Gastrocnemius medialis (tissue), 4 donors: ENCODE measurements at regions of chr14 and their contacts with region 1.

Region 1: DNA sequence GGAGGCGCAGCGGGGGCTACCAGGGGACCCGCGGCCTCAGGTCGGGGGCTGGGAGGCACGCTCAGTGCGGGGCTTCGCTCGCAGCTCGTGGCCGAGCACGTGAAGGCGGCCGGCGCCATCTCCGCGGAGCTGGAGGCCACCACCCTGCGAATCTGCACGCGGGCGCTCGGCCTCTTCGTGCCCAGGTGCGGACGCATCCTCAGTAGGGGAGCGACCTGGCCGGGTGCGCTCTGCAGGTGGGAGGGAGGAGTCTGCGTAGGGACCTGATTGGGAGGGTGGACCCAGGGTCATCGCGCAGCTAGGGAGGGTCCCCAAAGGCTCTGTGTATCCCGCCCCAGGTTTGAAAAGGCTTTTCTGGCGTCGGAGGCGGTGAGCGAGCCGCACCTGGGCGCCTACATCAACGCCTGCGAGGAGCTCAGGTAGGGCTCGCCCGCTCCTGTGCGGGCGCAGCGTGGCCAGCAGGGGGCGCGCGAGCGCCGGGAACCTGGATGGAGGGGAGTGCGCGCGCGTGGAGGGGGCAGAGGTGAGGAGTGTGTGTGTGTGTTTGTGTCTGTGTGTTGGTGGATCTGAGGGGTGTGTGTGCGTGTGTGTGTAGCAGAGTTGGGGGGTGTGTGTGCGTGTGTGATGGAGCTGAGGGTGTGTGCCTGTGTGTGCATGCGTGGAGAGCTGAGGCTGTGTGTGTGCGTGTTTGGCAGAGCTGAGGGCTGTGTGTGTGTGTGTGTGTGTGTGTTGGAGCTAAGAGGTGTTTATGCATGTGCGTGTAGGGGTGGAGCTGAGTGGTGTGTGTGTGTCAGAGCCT is 10.3 kb downstream of the EXOC3L4 start:
- DNase-seq: peak in 1 of 2 donors; percentile 49
- ATAC-seq: peak; percentile 73 to 77
- H3K4me3 ChIP-seq: no peak overlapping the region
- H3K27ac ChIP-seq: no peak overlapping the region
- H3K4me1 ChIP-seq: peaks cover 3 to 18% of the 10 kb centered on the region in 2 donors
- H3K27me3 ChIP-seq: peaks cover 31 to 45% (median 40%) of the 10 kb centered on the region in 3 donors
- CTCF ChIP-seq: peak; percentile 92 to 100 (median 99)
- POLR2A ChIP-seq: no peak

Region 2: GRCh38 chr14:102768223-102769048 is 336.4 kb before region 1 on chr14:
- in situ Hi-C with region 1: no loop called
- intact Hi-C with region 1: no loop called
- DNase-seq: no peak
- ATAC-seq: no peak
- H3K4me3 ChIP-seq: no peak overlapping the region
- H3K27ac ChIP-seq: no peak overlapping the region
- H3K4me1 ChIP-seq: no peaks in the 10 kb centered on the region
- H3K27me3 ChIP-seq: no peaks in the 10 kb centered on the region
- CTCF ChIP-seq: no peak
- POLR2A ChIP-seq: no peak

Region 3: DNA sequence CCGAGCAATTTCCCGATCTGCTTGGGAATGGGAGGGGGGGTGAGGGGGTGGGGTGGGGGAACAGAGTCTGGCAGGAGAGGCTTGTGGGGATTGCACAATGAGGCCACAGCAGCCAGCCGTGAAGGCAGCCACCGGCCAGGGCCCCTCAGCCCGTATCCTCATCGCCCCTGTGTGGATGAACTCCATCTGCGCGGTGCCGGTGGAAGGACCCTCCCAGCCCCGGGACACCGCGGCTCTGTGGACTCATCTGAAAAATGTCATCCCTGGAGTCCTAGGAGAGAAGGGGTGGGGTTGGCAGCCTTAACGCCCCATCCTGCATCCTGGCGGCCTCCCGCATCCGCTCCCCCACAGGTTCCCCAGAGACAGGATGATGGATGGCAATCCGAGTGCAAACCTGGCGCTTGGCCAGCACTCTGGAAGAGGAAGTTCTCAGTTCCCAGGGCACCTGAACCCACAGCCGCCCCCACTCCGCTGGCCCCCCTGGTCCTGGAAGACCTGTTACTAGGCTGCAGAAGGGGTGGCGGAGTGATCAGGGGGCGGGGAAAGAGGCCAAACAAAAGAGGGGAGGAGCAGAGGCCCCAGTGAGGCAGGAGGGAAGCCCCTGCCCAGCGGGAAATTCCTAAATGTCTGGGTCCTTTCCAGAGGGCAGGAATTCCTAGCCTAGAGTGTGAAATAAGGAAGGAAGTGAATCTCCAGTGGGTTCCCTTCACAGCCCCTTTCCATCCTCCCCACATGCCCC is 17.2 kb after region 1 on chr14:
- in situ Hi-C with region 1: no loop called
- intact Hi-C with region 1: loop called (anchors 2 kb)
- DNase-seq: peak in 1 of 2 donors; percentile 78
- ATAC-seq: peak; percentile 35 to 37
- H3K4me3 ChIP-seq: peak overlapping the region; percentile 61 to 74 (median 66)
- H3K27ac ChIP-seq: peak overlapping the region; percentile 74 to 87 (median 86)
- H3K4me1 ChIP-seq: peaks cover 41 to 54% of the 10 kb centered on the region in 2 donors
- H3K27me3 ChIP-seq: no peaks in the 10 kb centered on the region
- CTCF ChIP-seq: no peak
- POLR2A ChIP-seq: peak in 1 of 2 donors; percentile 7

Region 4: GRCh38 chr14:103141119-103141796 is 36.4 kb after region 1 on chr14:
- in situ Hi-C with region 1: no loop called
- intact Hi-C with region 1: loop called (anchors 1 kb)
- DNase-seq: no peak
- ATAC-seq: no peak
- H3K4me3 ChIP-seq: no peak overlapping the region
- H3K27ac ChIP-seq: no peak overlapping the region
- H3K4me1 ChIP-seq: peaks cover 2 to 3% of the 10 kb centered on the region in 2 donors
- H3K27me3 ChIP-seq: no peaks in the 10 kb centered on the region
- CTCF ChIP-seq: peak; percentile 54 to 76 (median 64)
- POLR2A ChIP-seq: no peak

Region 5: DNA sequence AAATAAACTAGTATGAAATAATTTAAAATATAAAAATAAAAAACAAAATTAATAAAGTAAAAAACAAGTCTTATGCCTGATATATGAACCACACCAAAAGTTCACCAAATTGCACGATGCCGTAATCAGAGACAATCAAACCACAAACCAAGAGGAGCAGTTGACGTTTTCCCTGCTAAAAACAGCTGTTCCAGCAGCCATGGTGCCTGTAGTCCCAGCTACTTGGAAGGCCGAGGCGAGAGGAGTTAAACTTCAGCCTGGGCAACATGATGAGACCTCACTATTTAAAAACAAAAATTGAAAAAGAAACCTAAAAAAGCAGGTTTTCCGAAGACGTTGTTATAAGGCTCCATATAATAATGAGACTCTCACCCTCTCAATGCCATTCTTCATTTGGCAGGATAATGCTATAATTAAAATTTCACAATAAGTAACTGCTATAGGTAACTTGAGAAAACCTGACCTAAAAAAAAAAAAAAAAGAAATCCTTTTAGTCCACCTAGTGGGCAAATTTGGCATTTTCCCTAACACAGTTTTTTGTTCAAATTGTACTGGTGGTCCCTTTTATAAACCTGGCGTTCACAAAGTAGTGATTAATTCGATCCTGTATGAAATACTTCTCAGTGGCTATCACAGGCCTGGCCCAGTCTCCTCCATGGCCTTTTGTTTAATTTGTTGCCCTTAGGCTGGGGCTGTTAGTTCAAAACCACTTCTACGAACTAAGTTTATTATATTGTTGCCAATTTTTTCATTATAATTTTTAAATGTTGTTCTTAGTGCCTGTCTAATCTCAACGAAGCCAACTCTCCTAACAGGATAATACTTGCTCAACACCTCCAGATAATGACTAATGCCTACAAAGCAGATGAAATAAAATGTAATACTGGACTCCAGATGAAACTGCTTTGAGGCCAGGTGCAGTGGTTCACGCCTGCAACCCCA is 80.5 kb after region 1 on chr14:
- in situ Hi-C with region 1: loop called in 2 of 4 experiments (anchors 10 kb)
- intact Hi-C with region 1: loop called (anchors 1 kb)
- DNase-seq: no peak
- ATAC-seq: peak; percentile 49 to 57
- H3K4me3 ChIP-seq: no peak overlapping the region
- H3K27ac ChIP-seq: peak overlapping the region in 1 of 4 donors; percentile 60
- H3K4me1 ChIP-seq: peaks cover 6% of the 10 kb centered on the region in 2 donors
- H3K27me3 ChIP-seq: no peaks in the 10 kb centered on the region
- CTCF ChIP-seq: peak; percentile 47 to 62 (median 60)
- POLR2A ChIP-seq: no peak

Region 6: GRCh38 chr14:103281496-103282231 is 176.8 kb after region 1 on chr14:
- in situ Hi-C with region 1: loop called in 2 of 4 experiments (anchors 5 to 10 kb)
- intact Hi-C with region 1: no loop called
- DNase-seq: peak; percentile 48 to 71
- ATAC-seq: peak; percentile 77 to 84
- H3K4me3 ChIP-seq: no peak overlapping the region
- H3K27ac ChIP-seq: peak overlapping the region; percentile 65 to 81 (median 70)
- H3K4me1 ChIP-seq: peaks cover 24 to 27% of the 10 kb centered on the region in 2 donors
- H3K27me3 ChIP-seq: peaks cover 3 to 23% (median 14%) of the 10 kb centered on the region in 3 donors
- CTCF ChIP-seq: peak in 4 of 5 experiments; percentile 4 to 56 (median 44)
- POLR2A ChIP-seq: no peak

Region 7: DNA sequence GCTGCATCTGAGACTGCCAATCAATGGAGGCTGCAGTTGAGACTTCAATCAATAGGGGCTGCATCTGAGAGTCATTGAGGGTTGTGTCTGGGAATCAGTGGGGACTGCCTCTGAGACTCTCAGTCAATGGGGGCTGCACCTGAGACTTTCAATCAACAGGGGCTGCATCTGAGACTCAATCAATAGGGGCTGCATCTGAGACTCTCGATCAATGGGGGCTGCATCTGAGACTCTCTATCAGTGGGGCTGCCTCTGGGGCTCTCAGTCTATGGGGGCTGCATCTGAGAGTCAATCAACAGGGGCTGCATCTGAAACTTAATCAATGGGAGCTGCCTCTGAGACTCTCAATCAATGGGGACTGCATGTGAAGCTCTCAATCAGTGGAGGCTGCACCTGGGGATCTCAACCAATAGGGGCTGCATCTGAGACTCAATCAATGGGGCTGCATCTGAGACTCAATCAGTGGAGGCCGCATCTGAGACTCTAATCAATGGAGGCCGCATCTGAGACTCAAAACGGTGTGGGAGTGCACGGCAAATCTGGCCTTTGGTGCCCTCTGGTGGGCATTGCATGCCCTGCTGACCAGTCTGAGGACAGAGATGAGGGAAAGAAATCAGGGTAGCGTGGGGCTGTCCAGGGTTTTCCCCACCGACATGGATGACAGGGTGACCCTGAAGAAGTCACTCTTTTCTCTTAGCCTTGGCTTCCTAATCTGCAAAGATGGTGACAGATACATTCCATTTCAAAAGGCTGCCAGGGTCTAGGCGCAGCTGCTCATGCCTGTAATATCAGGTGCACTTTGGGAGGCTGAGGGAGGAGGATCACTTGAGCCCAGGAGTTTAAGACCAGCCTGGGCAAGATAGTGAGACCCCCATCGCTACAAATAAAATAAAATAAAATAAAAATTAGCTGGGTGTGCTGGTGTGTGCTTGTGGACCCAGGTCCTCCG is 187.8 kb after region 1 on chr14:
- in situ Hi-C with region 1: loop called in 3 of 4 experiments (anchors 5 to 10 kb)
- intact Hi-C with region 1: loop called (anchors 1 kb)
- DNase-seq: peak; percentile 33 to 62
- ATAC-seq: peak; percentile 88 to 91
- H3K4me3 ChIP-seq: no peak overlapping the region
- H3K27ac ChIP-seq: no peak overlapping the region
- H3K4me1 ChIP-seq: no peaks in the 10 kb centered on the region
- H3K27me3 ChIP-seq: peaks cover 0 to 2% (median 0%) of the 10 kb centered on the region in 3 donors
- CTCF ChIP-seq: peak; percentile 90 to 95 (median 93)
- POLR2A ChIP-seq: no peak